ENCODE measurements at regions of chr4 and their contacts with region 1.

Region 1: GRCh38 chr4:184538023-184538599 is 63.8 kb upstream of the IRF2 start:
- DNase-seq: peak in 8 of 9 donors; percentile 42 to 67 (median 56)
- ATAC-seq: peak; percentile 79
- H3K4me3 ChIP-seq: peak overlapping the region; percentile 86
- H3K4me3 Mint-ChIP-seq: peak overlapping the region; percentile 83 to 99 (median 95)
- H3K27ac ChIP-seq: peak overlapping the region; percentile 97
- H3K27ac Mint-ChIP-seq: peak overlapping the region; percentile 90 to 100 (median 99)
- H3K4me1 ChIP-seq: peaks cover 20 to 22% of the 10 kb centered on the region in 2 donors
- H3K4me1 Mint-ChIP-seq: peaks cover 34 to 51% (median 45%) of the 10 kb centered on the region in 7 donors
- H3K27me3 ChIP-seq: no peaks in the 10 kb centered on the region
- H3K27me3 Mint-ChIP-seq: no peaks in the 10 kb centered on the region

Region 2: DNA sequence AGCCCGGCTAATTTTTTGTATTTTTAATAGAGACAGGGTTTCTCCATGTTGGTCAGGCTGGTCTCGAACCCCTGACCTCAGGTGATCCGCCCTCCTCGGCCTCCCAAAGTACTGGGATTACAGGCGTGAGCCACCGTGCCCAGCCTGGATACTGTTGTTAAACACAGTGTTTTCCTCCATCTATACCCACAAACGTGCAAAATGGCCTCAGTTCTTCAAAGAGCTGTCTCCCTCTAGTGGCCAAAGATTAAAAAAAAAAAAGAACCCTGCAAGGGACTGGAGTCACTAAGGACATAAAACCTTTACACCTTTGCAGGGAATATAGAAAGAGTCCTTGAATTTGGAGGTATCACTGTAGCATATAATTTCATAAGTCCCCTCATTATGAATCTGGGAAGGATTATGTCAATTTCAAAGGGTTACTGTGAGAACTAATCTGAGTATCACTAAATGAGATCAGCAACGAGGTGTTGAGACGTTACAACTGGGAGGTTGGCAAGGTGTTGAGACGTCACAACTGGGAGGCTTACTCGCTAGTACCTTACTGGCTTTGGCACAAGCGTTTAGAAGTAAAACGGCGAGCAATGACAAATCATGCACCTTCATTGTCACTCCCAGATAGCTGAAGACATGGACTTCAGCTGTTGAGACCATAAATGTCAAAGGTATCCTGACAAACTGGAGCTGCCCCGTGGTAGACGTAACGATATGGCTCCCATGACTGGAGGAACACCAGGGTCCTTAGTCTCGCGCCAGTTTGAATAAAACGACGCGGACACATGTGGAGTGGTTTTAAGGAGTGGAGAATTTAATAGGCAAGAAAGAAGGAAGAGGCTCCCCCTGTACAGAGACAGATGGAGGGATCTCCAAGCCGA is 287.1 kb before region 1 on chr4:
- CTCF ChIA-PET with region 1: no interaction called
- POLR2A ChIA-PET with region 1: no interaction called
- intact Hi-C with region 1: loop called in 1 of 2 experiments (anchors 1 kb)
- DNase-seq: peak in 7 of 9 donors; percentile 26 to 67 (median 59)
- ATAC-seq: peak; percentile 82
- H3K4me3 ChIP-seq: no peak overlapping the region
- H3K4me3 Mint-ChIP-seq: no peak overlapping the region
- H3K27ac ChIP-seq: no peak overlapping the region
- H3K27ac Mint-ChIP-seq: peak overlapping the region in 4 of 9 donors; percentile 1 to 65 (median 14)
- H3K4me1 ChIP-seq: no peaks in the 10 kb centered on the region
- H3K4me1 Mint-ChIP-seq: peaks cover 0 to 14% (median 0%) of the 10 kb centered on the region in 7 donors
- H3K27me3 ChIP-seq: no peaks in the 10 kb centered on the region
- H3K27me3 Mint-ChIP-seq: peaks cover 0 to 4% (median 0%) of the 10 kb centered on the region in 5 donors

Region 3: GRCh38 chr4:184343502-184344177 is 194.5 kb before region 1 on chr4:
- CTCF ChIA-PET with region 1: no interaction called
- POLR2A ChIA-PET with region 1: no interaction called
- intact Hi-C with region 1: loop called in 1 of 2 experiments (anchors 1 kb)
- DNase-seq: peak in 7 of 9 donors; percentile 18 to 59 (median 46)
- ATAC-seq: peak; percentile 59
- H3K4me3 ChIP-seq: peak overlapping the region; percentile 69
- H3K4me3 Mint-ChIP-seq: peak overlapping the region; percentile 74 to 92 (median 87)
- H3K27ac ChIP-seq: peak overlapping the region; percentile 4
- H3K27ac Mint-ChIP-seq: peak overlapping the region; percentile 40 to 88 (median 53)
- H3K4me1 ChIP-seq: no peaks in the 10 kb centered on the region
- H3K4me1 Mint-ChIP-seq: peaks cover 0 to 32% (median 16%) of the 10 kb centered on the region in 7 donors
- H3K27me3 ChIP-seq: no peaks in the 10 kb centered on the region
- H3K27me3 Mint-ChIP-seq: no peaks in the 10 kb centered on the region

Region 4: DNA sequence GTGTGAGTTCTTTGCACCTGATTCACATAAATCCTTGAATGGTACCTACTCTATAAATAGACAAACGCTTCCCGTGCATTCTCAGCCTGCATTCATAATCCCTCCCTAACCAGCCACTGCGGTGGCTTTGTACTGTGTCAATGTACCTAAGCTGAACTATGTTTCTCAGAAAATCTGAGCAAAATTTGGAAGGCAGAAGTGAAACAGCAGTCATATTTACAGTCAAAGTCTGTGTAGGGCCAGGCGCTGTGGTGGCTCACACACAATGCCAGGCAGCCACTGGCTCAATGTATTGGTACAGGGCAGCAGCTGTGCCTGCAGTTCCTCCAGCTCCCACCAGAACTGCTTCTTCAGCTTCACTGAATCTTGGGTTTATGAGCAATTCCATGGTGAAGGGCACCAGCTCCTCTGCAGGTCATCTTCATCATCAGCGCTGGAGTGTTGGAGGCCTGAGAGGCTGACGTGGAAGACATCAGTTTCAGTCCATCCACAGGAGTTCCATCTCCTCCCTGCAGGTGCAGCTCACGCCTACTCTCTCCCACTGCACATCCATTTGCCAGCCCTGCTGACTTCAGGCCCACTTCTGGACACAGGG is 31.5 kb before region 1 on chr4:
- CTCF ChIA-PET with region 1: interaction called, 6 read pairs
- POLR2A ChIA-PET with region 1: interaction called, 16 read pairs
- intact Hi-C with region 1: loop called (anchors 2 kb)
- DNase-seq: peak in 7 of 9 donors; percentile 7 to 41 (median 23)
- ATAC-seq: peak; percentile 77
- H3K4me3 ChIP-seq: no peak overlapping the region
- H3K4me3 Mint-ChIP-seq: peak overlapping the region in 6 of 10 donors; percentile 4 to 65 (median 42)
- H3K27ac ChIP-seq: no peak overlapping the region
- H3K27ac Mint-ChIP-seq: peak overlapping the region in 7 of 9 donors; percentile 20 to 89 (median 39)
- H3K4me1 ChIP-seq: peaks cover 13 to 20% of the 10 kb centered on the region in 2 donors
- H3K4me1 Mint-ChIP-seq: peaks cover 14 to 38% (median 35%) of the 10 kb centered on the region in 7 donors
- H3K27me3 ChIP-seq: no peaks in the 10 kb centered on the region
- H3K27me3 Mint-ChIP-seq: no peaks in the 10 kb centered on the region

Region 5: GRCh38 chr4:184825896-184826690 is 288.0 kb after region 1 on chr4 and contains the start of gene ACSL1:
- CTCF ChIA-PET with region 1: no interaction called
- POLR2A ChIA-PET with region 1: interaction called, 3 read pairs
- intact Hi-C with region 1: loop called (anchors 2 to 10 kb)
- DNase-seq: peak; percentile 63 to 83 (median 75)
- ATAC-seq: peak; percentile 95
- H3K4me3 ChIP-seq: peak within 1 kb of the TSS; percentile 59
- H3K4me3 Mint-ChIP-seq: peak within 1 kb of the TSS; percentile 89 to 94 (median 91)
- H3K27ac ChIP-seq: peak within 1 kb of the TSS; percentile 73
- H3K27ac Mint-ChIP-seq: peak within 1 kb of the TSS; percentile 79 to 91 (median 90)
- H3K4me1 ChIP-seq: peaks cover 4 to 7% of the 10 kb centered on the region in 2 donors
- H3K4me1 Mint-ChIP-seq: peaks cover 21 to 46% (median 33%) of the 10 kb centered on the region in 7 donors
- H3K27me3 ChIP-seq: no peaks in the 10 kb centered on the region
- H3K27me3 Mint-ChIP-seq: peaks cover 0 to 25% (median 0%) of the 10 kb centered on the region in 5 donors
- total RNA-seq, gene ACSL1: 9.5 to 80.1 (median 20.4) TPM

Region 6: GRCh38 chr4:185425647-185426352 is 887.7 kb after region 1 on chr4 and contains the start of gene UFSP2:
- CTCF ChIA-PET with region 1: no interaction called
- POLR2A ChIA-PET with region 1: no interaction called
- intact Hi-C with region 1: loop called (anchors 2 to 5 kb)
- DNase-seq: peak; percentile 88 to 96 (median 92)
- ATAC-seq: peak; percentile 93
- H3K4me3 ChIP-seq: peak within 1 kb of the TSS; percentile 98
- H3K4me3 Mint-ChIP-seq: peak within 1 kb of the TSS; percentile 78 to 97 (median 90)
- H3K27ac ChIP-seq: peak within 1 kb of the TSS; percentile 95
- H3K27ac Mint-ChIP-seq: peak within 1 kb of the TSS; percentile 89 to 100 (median 99)
- H3K4me1 ChIP-seq: peaks cover 16 to 18% of the 10 kb centered on the region in 2 donors
- H3K4me1 Mint-ChIP-seq: peaks cover 25 to 43% (median 38%) of the 10 kb centered on the region in 7 donors
- H3K27me3 ChIP-seq: no peaks in the 10 kb centered on the region
- H3K27me3 Mint-ChIP-seq: peaks cover 0 to 12% (median 7%) of the 10 kb centered on the region in 5 donors
- total RNA-seq, gene UFSP2: 13.9 to 34.5 (median 21.0) TPM